Activated CD8-positive, alpha-beta memory T cell treated with anti-CD3 and anti-CD28 coated beads, Interleukin-2, amount 10 ng/mL, durations not matched to agents 7 days and 5 days (primary cell): ENCODE measurements at regions of chr1 and their contacts with region 1.

Region 1: GRCh38 chr1:65235867-65236805 is 73.2 kb upstream of the DNAJC6 start:
- DNase-seq: no peak
- ATAC-seq: no peak
- H3K4me3 Mint-ChIP-seq: no peak overlapping the region
- H3K27ac Mint-ChIP-seq: no peak overlapping the region
- H3K4me1 Mint-ChIP-seq: peaks cover 16% of the 10 kb centered on the region
- H3K27me3 Mint-ChIP-seq: peaks cover 11% of the 10 kb centered on the region

Region 2: DNA sequence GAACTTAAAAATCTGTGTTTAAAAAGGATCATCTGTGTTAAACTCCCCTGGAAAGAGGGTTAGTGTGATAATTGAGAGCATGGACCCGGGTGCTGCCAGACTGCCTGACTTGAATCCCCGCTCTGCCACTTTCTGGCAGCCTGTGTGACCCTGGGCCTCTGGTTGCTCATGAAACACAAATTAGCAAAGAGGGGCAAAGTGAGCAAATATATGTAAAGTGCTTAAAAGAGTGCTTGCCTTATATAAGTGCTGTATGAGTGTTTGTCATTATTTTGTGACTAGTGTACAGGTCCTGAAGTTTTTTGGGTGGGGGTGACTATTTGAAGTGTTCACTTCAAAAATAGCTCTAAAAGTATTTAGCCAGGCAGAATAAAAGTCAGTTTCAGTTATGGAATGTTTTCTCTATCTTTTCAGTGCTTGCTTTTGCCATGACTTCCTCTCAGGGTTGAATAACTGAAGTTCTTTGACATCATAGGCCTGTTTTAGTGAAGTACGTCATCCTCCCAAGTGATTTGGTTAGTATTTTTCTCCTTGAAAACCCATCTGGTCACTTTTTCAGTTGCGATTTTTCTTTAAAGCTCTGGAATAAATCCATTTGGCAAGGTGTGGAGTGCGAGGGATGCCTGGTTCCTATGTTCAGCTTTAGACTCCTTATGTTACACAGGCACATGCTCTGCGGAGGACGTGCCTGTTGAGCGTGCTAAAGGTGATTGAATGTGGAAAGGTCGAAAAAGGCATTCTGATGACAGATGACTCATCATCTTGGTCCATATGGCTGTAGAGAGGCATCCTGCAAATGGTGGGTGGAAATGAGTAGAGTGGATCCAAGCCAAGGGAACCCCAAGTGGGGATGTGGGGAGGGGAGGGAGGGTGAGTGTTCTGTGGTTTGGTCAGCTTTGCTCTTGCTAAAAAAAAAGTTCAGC is 40.4 kb before region 1 on chr1:
- CTCF ChIA-PET with region 1: no interaction called
- DNase-seq: no peak
- ATAC-seq: no peak
- H3K4me3 Mint-ChIP-seq: no peak overlapping the region
- H3K27ac Mint-ChIP-seq: no peak overlapping the region
- H3K4me1 Mint-ChIP-seq: peaks cover 20% of the 10 kb centered on the region
- H3K27me3 Mint-ChIP-seq: no peaks in the 10 kb centered on the region

Region 3: GRCh38 chr1:65247513-65248359 is 11.6 kb after region 1 on chr1:
- CTCF ChIA-PET with region 1: interaction called, 20 read pairs
- DNase-seq: no peak
- ATAC-seq: no peak
- H3K4me3 Mint-ChIP-seq: no peak overlapping the region
- H3K27ac Mint-ChIP-seq: no peak overlapping the region
- H3K4me1 Mint-ChIP-seq: no peaks in the 10 kb centered on the region
- H3K27me3 Mint-ChIP-seq: peaks cover 26% of the 10 kb centered on the region

Region 4: DNA sequence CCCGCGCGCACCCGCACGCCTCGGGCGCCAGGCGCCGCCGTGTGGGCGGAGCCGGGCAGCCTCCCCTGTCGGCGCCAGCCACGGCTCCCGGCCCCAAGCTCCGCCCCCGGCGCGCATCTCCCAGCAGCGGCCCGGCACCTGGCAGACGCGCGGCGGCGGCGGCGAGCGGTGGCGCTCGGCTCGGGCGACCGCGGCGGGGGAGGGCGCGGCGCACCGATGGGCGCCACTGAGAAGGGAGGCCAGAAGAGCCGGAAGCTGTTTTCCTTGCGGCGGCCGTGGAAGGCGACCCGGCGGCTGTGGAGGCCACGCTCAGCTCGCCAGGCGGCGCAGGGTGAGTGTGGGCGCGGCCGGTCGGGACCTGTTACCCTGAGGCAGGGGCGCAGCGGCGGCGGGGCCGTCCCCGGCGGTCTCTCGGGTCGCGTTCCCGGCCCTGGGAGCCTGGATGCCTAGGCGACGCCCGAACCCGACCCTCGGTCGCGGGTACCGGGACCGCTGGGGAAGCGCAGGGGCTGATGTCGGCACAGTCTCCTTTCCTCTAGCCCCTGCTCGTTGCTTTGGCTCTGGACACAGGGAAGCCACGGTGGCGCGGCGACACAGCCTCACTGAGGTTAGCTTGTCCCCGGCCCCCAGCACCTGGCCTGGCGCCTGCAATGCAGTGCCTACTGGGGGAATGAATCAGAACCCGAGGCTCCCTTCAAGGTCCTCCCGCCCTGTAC is 18.3 kb after region 1 on chr1:
- CTCF ChIA-PET with region 1: interaction called, 20 read pairs
- DNase-seq: peak; percentile 91
- ATAC-seq: peak; percentile 98
- H3K4me3 Mint-ChIP-seq: peak overlapping the region; percentile 79
- H3K27ac Mint-ChIP-seq: peak overlapping the region; percentile 81
- H3K4me1 Mint-ChIP-seq: peaks cover 40% of the 10 kb centered on the region
- H3K27me3 Mint-ChIP-seq: peaks cover 5% of the 10 kb centered on the region

Region 5: DNA sequence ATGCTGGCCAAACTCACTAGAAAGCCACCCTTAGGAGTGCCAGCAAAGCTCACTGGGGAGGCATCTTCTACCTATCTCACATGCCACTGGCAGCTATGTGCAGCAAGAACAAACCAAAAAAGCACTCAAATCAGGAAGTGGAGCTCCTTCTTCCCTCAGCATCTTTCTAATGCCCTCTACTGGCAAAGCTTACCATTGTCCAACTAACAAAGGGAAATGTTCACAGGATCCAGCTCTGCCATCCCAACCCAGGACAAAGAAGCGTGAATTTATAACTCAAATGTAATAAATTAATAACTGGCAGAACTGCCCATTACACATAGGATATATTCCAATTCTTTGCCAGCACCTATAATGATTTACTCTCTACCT is 223.2 kb after region 1 on chr1:
- CTCF ChIA-PET with region 1: interaction called, 21 read pairs
- DNase-seq: no peak
- ATAC-seq: peak; percentile 73
- H3K4me3 Mint-ChIP-seq: no peak overlapping the region
- H3K27ac Mint-ChIP-seq: no peak overlapping the region
- H3K4me1 Mint-ChIP-seq: peaks cover 22% of the 10 kb centered on the region
- H3K27me3 Mint-ChIP-seq: peaks cover 4% of the 10 kb centered on the region